Common myeloid progenitor, CD34-positive (primary cell): ENCODE measurements at regions of chr22 and their contacts with region 1.

Region 1: DNA sequence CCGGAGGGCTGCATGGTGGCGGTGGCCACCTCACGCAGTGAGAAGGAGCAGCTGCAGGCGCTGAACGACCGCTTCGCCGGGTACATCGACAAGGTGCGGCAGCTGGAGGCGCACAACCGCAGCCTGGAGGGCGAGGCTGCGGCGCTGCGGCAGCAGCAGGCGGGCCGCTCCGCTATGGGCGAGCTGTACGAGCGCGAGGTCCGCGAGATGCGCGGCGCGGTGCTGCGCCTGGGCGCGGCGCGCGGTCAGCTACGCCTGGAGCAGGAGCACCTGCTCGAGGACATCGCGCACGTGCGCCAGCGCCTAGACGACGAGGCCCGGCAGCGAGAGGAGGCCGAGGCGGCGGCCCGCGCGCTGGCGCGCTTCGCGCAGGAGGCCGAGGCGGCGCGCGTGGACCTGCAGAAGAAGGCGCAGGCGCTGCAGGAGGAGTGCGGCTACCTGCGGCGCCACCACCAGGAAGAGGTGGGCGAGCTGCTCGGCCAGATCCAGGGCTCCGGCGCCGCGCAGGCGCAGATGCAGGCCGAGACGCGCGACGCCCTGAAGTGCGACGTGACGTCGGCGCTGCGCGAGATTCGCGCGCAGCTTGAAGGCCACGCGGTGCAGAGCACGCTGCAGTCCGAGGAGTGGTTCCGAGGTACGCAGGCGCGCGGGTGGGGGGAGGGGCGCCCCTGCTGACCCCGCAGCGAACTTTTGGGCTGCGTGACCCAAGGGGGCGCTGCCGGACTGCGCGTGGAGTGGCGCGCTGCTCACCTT is 670 bp downstream of the NEFH start:
- DNase-seq: peak; percentile 56 to 82 (median 80)
- H3K4me3 ChIP-seq: peak overlapping the region in 5 of 7 experiments; percentile 35 to 66 (median 46)
- H3K27ac ChIP-seq: no peak overlapping the region
- H3K4me1 ChIP-seq: peaks cover 2 to 45% (median 40%) of the 10 kb centered on the region in 4 experiments
- H3K27me3 ChIP-seq: peaks cover 0 to 42% (median 17%) of the 10 kb centered on the region in 5 experiments

Region 2: GRCh38 chr22:29320546-29320945 is 160.1 kb before region 1 on chr22:
- CTCF ChIA-PET with region 1: no interaction called
- POLR2A ChIA-PET with region 1: no interaction called
- DNase-seq: peak in 2 of 3 donors; percentile 39 to 57
- H3K4me3 ChIP-seq: no peak overlapping the region
- H3K27ac ChIP-seq: no peak overlapping the region
- H3K4me1 ChIP-seq: peaks cover 0 to 5% (median 3%) of the 10 kb centered on the region in 4 experiments
- H3K27me3 ChIP-seq: peaks cover 0 to 14% (median 7%) of the 10 kb centered on the region in 5 experiments

Region 3: DNA sequence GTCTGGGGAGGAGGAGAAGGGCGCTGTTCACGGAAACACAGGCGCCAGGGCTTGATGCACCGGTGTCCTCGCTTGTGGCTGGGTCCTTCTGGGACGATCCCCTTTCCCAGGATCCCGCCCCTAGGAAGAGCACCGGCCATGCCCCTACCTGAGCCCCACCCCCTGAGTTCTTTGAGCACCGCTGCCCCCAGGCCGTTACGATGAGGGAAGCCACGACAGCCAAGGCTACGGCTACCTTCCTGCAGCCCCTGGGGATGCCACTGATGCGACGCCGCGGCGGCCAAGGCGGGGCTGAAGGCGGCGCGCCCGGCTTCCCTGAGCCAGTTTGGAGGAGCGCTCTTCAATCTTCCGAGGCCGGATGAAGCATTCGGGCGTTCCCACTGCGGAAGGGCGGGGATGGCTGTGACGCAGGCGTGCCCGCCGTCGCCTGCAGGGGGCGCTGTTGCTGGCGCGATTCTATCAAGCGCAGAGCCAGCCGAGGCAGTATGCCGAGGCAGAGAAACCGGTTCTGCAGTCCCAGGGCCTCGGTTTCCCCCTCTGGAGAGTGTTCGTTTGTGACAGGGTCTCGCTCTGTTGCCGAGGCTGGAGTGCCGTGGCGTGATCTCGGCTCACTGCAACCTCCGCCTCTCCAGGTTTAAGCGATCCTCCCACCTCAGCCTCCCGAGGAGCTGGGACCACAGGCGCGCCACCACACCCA is 10.4 kb before region 1 on chr22:
- CTCF ChIA-PET with region 1: interaction called, 21 read pairs
- POLR2A ChIA-PET with region 1: no interaction called
- DNase-seq: peak; percentile 51 to 75 (median 56)
- H3K4me3 ChIP-seq: peak overlapping the region in 3 of 7 experiments; percentile 49 to 56 (median 50)
- H3K27ac ChIP-seq: no peak overlapping the region
- H3K4me1 ChIP-seq: peaks cover 0 to 10% (median 6%) of the 10 kb centered on the region in 4 experiments
- H3K27me3 ChIP-seq: peaks cover 0 to 7% (median 0%) of the 10 kb centered on the region in 5 experiments